BJ (cell line): ENCODE measurements at regions of chrX and their contacts with region 1.

Region 1: DNA sequence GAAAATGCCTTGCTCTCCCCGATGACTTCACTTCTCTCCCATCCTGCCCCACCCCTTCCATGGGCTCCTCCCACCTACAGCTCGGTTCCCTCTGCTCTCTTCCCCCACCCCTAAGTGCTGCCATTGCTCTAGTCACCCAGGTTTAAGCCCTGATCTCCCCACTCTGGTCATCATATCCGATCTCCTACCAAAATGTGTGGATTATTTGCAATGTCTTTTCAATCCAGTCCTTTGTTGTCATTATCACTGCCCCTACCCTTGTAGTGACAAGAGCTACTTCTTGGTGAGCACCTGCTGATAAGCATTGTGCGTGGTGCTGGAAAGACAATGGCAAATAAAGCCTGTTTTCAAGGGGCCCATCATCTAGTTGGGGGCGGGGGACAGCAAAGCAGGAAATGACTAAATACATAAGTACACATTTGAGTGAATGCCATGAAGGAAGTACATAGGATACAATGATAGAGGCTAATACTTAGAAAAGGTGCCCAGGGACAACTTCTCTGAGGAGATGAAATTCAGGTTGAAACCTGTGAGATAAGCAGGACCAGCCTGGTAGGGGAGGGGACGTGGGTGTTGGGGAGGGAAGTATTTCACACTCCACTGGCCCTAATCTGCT is 63.8 kb downstream of the DLG3 start:
- DNase-seq: no peak
- H3K4me3 ChIP-seq: no peak overlapping the region
- H3K27me3 ChIP-seq: no peaks in the 10 kb centered on the region
- CTCF ChIP-seq: no peak

Region 2: GRCh38 chrX:70482300-70482699 is 26.1 kb before region 1 on chrX:
- CTCF ChIA-PET with region 1: interaction called, 3 read pairs
- POLR2A ChIA-PET with region 1: interaction called, 13 read pairs
- DNase-seq: no peak
- H3K4me3 ChIP-seq: no peak overlapping the region
- H3K27me3 ChIP-seq: no peaks in the 10 kb centered on the region
- CTCF ChIP-seq: no peak

Region 3: DNA sequence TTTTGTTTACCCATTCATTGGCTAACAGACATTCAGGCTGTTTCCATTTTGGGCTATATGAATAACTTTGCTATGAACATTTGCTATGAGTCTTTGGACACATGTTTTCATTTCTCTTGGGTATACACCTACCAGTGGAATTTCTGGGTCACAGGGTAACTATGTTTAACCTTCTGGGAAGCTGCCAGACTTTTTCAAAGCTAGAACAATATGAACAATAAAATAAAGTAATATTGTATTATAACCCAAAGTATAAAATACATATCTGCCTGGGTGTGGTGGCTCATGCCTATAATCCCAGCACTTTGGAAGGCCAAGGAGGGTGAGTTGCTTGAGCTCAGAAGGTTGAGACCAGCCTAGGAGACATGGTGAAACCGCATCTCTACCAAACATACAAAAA is 26.8 kb after region 1 on chrX:
- CTCF ChIA-PET with region 1: no interaction called
- POLR2A ChIA-PET with region 1: no interaction called
- DNase-seq: no peak
- H3K4me3 ChIP-seq: no peak overlapping the region
- H3K27me3 ChIP-seq: no peaks in the 10 kb centered on the region
- CTCF ChIP-seq: no peak